ENCODE measurements at regions of chr3 and their contacts with region 1.

Region 1: DNA sequence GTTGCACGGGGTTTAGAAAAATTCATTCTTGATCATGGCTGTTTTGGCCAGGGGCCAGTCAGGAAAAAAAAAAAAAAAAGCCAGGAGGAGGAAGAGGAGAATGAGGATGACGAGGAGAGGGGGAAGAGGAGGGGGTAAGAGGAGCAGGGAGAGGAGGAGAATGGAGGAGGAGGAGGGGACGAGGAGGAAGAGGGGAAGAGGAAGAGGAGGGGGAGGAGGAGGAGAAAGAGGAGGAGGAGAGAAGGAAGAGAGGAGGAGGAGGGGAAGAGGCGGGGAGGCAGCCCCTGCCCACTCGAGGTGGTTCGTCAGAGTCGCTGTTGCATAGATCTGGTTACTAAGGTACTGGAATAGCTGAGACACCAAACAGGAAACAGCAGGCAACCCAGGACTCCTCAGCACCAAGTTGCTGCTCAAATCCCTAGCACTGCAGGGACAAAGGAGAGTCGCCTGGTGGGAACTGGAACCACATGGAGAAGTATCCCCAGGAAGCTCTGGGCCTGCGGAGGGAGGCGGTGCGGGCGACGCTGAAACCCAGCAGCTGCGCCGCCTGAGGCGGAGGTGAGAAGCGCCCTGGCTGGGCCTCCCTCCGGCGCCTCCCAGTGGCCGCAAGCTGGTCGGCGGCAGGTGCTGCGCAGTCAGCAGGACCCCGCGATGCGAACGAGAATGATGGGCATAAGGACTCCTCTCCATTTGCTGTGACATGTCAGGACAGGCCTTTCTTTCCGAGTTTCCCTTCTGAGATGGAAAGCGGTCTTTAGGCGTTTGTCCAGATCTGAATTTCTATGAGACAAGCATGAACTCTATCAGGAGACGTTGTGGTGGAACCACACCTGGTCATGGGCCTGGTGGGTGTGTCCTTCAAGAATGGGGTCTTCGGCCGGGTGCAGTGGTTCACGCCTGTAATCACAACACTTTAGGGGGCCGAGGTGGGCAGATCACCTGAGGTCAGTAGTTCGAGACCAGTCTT is 17.5 kb downstream of the FAM240A start:
- DNase-seq: peak; percentile 91
- H3K4me3 ChIP-seq: peak overlapping the region; percentile 41 to 56 (median 48)
- H3K27ac ChIP-seq: peak overlapping the region; percentile 48 to 76 (median 64)
- H3K4me1 ChIP-seq: peaks cover 13 to 23% (median 22%) of the 10 kb centered on the region in 4 donors
- H3K27me3 ChIP-seq: peaks cover 0 to 11% (median 0%) of the 10 kb centered on the region in 4 donors
- CTCF ChIP-seq: peak; percentile 87 to 96 (median 88)
- EP300 ChIP-seq: no peak
- POLR2A ChIP-seq: no peak

Region 2: DNA sequence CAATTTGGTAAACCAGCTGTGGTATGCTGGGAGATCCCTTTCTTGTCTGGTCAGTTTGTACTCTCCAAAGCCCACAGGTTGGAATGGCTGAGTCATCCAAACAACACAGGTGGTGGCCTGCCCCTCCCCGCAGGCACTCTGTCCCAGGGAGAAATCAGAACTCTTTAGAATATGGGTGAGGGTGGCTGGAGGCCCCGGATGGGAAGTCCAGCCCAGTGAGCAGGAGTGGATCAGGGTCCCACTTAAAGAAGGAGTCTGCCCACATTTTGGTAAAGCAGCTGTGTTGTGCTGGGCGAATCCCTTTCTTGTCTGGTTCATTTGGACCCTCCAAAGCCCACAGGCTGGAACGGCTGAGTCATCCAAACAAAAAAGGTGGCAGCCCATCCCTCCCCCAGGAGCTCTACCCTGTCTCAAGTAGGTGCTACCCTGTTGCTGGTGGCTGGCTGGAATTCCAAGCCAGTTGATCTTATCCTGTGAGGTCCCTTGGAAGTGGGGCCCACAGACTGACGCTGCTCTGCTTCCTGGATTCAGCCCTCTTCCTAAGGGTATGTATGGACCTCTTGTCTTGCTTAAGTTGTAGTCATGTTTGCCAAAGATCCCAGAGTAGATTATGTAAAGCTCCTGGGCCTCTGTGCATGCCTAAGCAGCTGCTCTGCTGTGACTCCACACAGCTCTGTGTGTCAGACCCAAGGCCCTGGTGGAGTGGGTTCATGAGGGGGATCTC is 466.4 kb before region 1 on chr3:
- intact Hi-C with region 1: no loop called
- DNase-seq: no peak
- H3K4me3 ChIP-seq: no peak overlapping the region
- H3K27ac ChIP-seq: no peak overlapping the region
- H3K4me1 ChIP-seq: no peaks in the 10 kb centered on the region
- H3K27me3 ChIP-seq: no peaks in the 10 kb centered on the region
- CTCF ChIP-seq: no peak
- EP300 ChIP-seq: no peak
- POLR2A ChIP-seq: no peak

Region 3: GRCh38 chr3:46378426-46378942 is 251.3 kb before region 1 on chr3:
- intact Hi-C with region 1: no loop called
- DNase-seq: no peak
- H3K4me3 ChIP-seq: no peak overlapping the region
- H3K27ac ChIP-seq: no peak overlapping the region
- H3K4me1 ChIP-seq: peaks cover 4 to 9% (median 8%) of the 10 kb centered on the region in 4 donors
- H3K27me3 ChIP-seq: peaks cover 0 to 15% (median 0%) of the 10 kb centered on the region in 4 donors
- CTCF ChIP-seq: peak; percentile 27 to 37 (median 30)
- EP300 ChIP-seq: no peak
- POLR2A ChIP-seq: no peak

Region 4: DNA sequence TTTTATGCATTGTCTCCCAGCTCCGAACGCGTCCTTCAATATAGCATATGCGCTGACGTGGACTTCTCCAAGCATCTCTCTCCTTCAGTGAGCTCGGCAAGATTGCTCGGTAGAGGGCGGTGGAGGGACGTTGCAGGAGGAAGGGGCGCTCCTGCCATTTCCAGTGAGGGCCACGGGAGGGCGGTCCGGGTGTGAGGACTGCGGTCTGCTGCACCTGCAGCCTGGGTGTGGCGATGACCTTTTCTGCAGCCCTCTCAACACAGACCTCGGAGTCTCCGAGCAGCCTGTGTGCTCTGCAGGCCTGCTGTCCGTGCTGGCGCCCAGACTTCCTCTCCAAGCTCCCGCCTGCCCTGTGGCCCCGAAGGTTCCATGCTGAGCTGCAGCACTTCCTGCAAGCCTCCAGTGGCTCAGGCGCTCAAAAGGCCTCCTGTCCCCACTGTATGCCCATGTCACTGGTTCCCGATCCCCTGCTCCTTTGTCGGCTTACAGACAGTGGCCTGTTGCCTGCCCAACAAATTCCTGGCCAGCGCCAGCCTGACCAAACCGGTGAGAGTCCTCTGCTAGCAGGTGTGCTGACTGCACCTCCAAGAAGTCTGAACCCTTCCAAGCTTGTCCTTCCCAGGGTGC is 141.0 kb before region 1 on chr3:
- intact Hi-C with region 1: loop called (anchors 2 kb)
- DNase-seq: no peak
- H3K4me3 ChIP-seq: peak overlapping the region in 1 of 4 donors; percentile 5
- H3K27ac ChIP-seq: no peak overlapping the region
- H3K4me1 ChIP-seq: peaks cover 0 to 8% (median 7%) of the 10 kb centered on the region in 4 donors
- H3K27me3 ChIP-seq: peaks cover 0 to 7% (median 0%) of the 10 kb centered on the region in 4 donors
- CTCF ChIP-seq: peak; percentile 80 to 89 (median 84)
- EP300 ChIP-seq: no peak
- POLR2A ChIP-seq: no peak

Region 5: DNA sequence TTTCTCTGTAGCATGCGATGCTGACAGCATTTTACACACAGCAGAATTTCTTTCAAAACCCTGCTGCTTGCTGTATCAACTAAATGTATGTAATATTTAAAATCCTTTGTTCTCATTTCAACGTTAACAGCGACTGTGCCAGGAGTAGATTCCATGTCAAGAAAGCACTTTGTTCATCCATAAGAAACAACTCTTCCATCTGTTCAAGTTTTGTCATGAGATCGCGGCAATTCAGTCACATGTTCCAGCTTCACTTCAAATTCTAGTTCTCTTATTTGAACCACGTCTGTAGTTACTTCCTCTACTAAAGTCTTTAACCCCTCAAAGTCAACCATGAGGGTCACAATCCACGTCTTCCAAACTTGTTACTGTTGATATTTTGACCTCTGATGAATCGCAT is 1101.2 kb after region 1 on chr3:
- intact Hi-C with region 1: no loop called
- DNase-seq: no peak
- H3K4me3 ChIP-seq: no peak overlapping the region
- H3K27ac ChIP-seq: no peak overlapping the region
- H3K4me1 ChIP-seq: no peaks in the 10 kb centered on the region
- H3K27me3 ChIP-seq: no peaks in the 10 kb centered on the region
- CTCF ChIP-seq: no peak
- EP300 ChIP-seq: no peak
- POLR2A ChIP-seq: no peak